CD8-positive, alpha-beta T cell (primary cell): ENCODE measurements at regions of chr1 and their contacts with region 1.

Region 1: GRCh38 chr1:21782868-21783678 is at the start of gene USP48:
- DNase-seq: peak; percentile 93 to 98 (median 96)
- ATAC-seq: peak; percentile 83
- H3K4me3 ChIP-seq: peak within 1 kb of the TSS; percentile 89 to 100
- H3K4me3 Mint-ChIP-seq: peak within 1 kb of the TSS; percentile 98
- H3K27ac ChIP-seq: peak within 1 kb of the TSS; percentile 100
- H3K27ac Mint-ChIP-seq: peak within 1 kb of the TSS; percentile 100
- H3K4me1 ChIP-seq: peaks cover 10% of the 10 kb centered on the region
- H3K4me1 Mint-ChIP-seq: peaks cover 31% of the 10 kb centered on the region
- H3K27me3 ChIP-seq: no peaks in the 10 kb centered on the region
- H3K27me3 Mint-ChIP-seq: no peaks in the 10 kb centered on the region
- CTCF ChIP-seq: no peak
- total RNA-seq, gene USP48: 58.7 to 68.3 TPM

Region 2: GRCh38 chr1:21334214-21335087 is 448.6 kb before region 1 on chr1:
- CTCF ChIA-PET with region 1: no interaction called
- POLR2A ChIA-PET with region 1: no interaction called
- intact Hi-C with region 1: loop called in 1 of 2 experiments (anchors 10 kb)
- DNase-seq: peak; percentile 68 to 94 (median 84)
- ATAC-seq: peak; percentile 86
- H3K4me3 ChIP-seq: peak overlapping the region; percentile 29 to 47
- H3K4me3 Mint-ChIP-seq: peak overlapping the region; percentile 88
- H3K27ac ChIP-seq: peak overlapping the region; percentile 57 to 89
- H3K27ac Mint-ChIP-seq: peak overlapping the region; percentile 98
- H3K4me1 ChIP-seq: peaks cover 84% of the 10 kb centered on the region
- H3K4me1 Mint-ChIP-seq: peaks cover 85% of the 10 kb centered on the region
- H3K27me3 ChIP-seq: no peaks in the 10 kb centered on the region
- H3K27me3 Mint-ChIP-seq: no peaks in the 10 kb centered on the region
- CTCF ChIP-seq: peak; percentile 58

Region 3: GRCh38 chr1:21749109-21749508 is 34.0 kb before region 1 on chr1:
- CTCF ChIA-PET with region 1: no interaction called
- POLR2A ChIA-PET with region 1: interaction called, 4 read pairs
- intact Hi-C with region 1: loop called in 1 of 2 experiments (anchors 5 kb)
- DNase-seq: no peak
- ATAC-seq: no peak
- H3K4me3 ChIP-seq: no peak overlapping the region
- H3K4me3 Mint-ChIP-seq: no peak overlapping the region
- H3K27ac ChIP-seq: no peak overlapping the region
- H3K27ac Mint-ChIP-seq: peak overlapping the region; percentile 74
- H3K4me1 ChIP-seq: peaks cover under 1% of the 10 kb centered on the region
- H3K4me1 Mint-ChIP-seq: no peaks in the 10 kb centered on the region
- H3K27me3 ChIP-seq: no peaks in the 10 kb centered on the region
- H3K27me3 Mint-ChIP-seq: no peaks in the 10 kb centered on the region
- CTCF ChIP-seq: no peak

Region 4: GRCh38 chr1:21882669-21883415 is 99.8 kb after region 1 on chr1:
- CTCF ChIA-PET with region 1: no interaction called
- POLR2A ChIA-PET with region 1: no interaction called
- intact Hi-C with region 1: no loop called
- DNase-seq: no peak
- ATAC-seq: no peak
- H3K4me3 ChIP-seq: no peak overlapping the region
- H3K4me3 Mint-ChIP-seq: no peak overlapping the region
- H3K27ac ChIP-seq: no peak overlapping the region
- H3K27ac Mint-ChIP-seq: no peak overlapping the region
- H3K4me1 ChIP-seq: no peaks in the 10 kb centered on the region
- H3K4me1 Mint-ChIP-seq: no peaks in the 10 kb centered on the region
- H3K27me3 ChIP-seq: no peaks in the 10 kb centered on the region
- H3K27me3 Mint-ChIP-seq: no peaks in the 10 kb centered on the region
- CTCF ChIP-seq: no peak

Region 5: DNA sequence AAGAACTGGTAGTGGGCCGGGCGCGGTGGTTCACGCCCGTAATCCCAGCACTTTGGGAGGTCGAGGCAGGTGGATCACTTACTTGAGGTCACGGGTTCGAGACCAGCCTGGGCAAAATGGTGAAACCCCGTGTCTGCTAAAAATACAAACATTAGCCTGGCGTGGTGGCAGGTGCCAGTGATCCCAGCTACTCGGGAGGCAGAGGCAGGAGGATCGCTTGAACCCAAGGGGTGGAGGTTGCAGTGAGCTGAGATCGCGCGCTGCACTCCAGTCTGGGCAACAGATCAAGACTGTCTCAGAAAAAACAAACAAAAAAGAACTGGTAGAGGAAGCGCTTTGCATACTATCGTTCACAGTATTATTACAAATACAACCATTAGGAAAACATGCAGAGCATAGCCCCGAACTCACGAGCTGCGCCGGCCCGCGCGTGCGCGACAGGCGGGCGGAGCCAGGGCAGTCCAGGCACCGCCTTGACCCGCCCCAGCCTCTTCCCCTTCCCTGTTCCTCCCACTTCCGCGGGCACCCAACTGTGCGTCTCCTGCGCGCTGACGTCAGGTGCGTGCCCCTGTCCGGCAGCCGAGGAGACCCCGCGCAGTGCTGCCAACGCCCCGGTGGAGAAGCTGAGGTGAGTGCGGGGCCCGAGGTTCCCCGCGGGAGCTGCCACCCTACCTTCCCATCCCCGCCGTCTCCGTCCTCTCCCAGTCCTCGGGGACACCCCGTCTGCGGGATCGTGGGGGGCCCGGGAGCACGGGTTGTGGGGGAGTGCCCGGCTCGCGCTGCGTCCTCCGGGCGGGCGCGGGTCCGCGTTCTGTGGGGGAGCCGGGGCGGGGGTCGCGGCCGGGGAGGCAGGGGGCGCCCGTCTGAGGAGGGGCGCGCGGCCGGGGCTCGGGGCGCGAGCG is 269.3 kb after region 1 on chr1 and contains the start of gene CDC42:
- CTCF ChIA-PET with region 1: no interaction called
- POLR2A ChIA-PET with region 1: interaction called, 4 read pairs
- intact Hi-C with region 1: loop called (anchors 1 kb)
- DNase-seq: peak; percentile 95 to 98 (median 96)
- ATAC-seq: peak; percentile 90
- H3K4me3 ChIP-seq: peak within 1 kb of the TSS; percentile 75 to 88
- H3K4me3 Mint-ChIP-seq: peak within 1 kb of the TSS; percentile 98
- H3K27ac ChIP-seq: peak within 1 kb of the TSS; percentile 98 to 99
- H3K27ac Mint-ChIP-seq: peak within 1 kb of the TSS; percentile 99
- H3K4me1 ChIP-seq: peaks cover 54% of the 10 kb centered on the region
- H3K4me1 Mint-ChIP-seq: peaks cover 60% of the 10 kb centered on the region
- H3K27me3 ChIP-seq: no peaks in the 10 kb centered on the region
- H3K27me3 Mint-ChIP-seq: no peaks in the 10 kb centered on the region
- CTCF ChIP-seq: no peak
- total RNA-seq, gene CDC42: 327 to 377 TPM

Region 6: GRCh38 chr1:22536506-22536905 is 753.4 kb after region 1 on chr1:
- CTCF ChIA-PET with region 1: no interaction called
- POLR2A ChIA-PET with region 1: no interaction called
- intact Hi-C with region 1: no loop called
- DNase-seq: no peak
- ATAC-seq: no peak
- H3K4me3 ChIP-seq: no peak overlapping the region
- H3K4me3 Mint-ChIP-seq: no peak overlapping the region
- H3K27ac ChIP-seq: no peak overlapping the region
- H3K27ac Mint-ChIP-seq: peak overlapping the region; percentile 66
- H3K4me1 ChIP-seq: no peaks in the 10 kb centered on the region
- H3K4me1 Mint-ChIP-seq: peaks cover 21% of the 10 kb centered on the region
- H3K27me3 ChIP-seq: no peaks in the 10 kb centered on the region
- H3K27me3 Mint-ChIP-seq: no peaks in the 10 kb centered on the region
- CTCF ChIP-seq: no peak